Spleen (tissue), 13 donors: ENCODE measurements at regions of chr21 and their contacts with region 1.

Region 1: GRCh38 chr21:25385911-25386474 is 221.3 kb downstream of the MRPL39 start:
- DNase-seq: no peak
- H3K4me3 ChIP-seq: no peak overlapping the region
- H3K27ac ChIP-seq: no peak overlapping the region
- H3K4me1 ChIP-seq: peaks cover 0 to 7% (median 4%) of the 10 kb centered on the region in 6 donors
- H3K27me3 ChIP-seq: no peaks in the 10 kb centered on the region
- CTCF ChIP-seq: peak; percentile 39 to 82 (median 70)
- POLR2A ChIP-seq: no peak

Region 2: GRCh38 chr21:25283720-25284119 is 102.3 kb before region 1 on chr21:
- intact Hi-C with region 1: loop called (anchors 10 kb)
- DNase-seq: no peak
- H3K4me3 ChIP-seq: no peak overlapping the region
- H3K27ac ChIP-seq: no peak overlapping the region
- H3K4me1 ChIP-seq: no peaks in the 10 kb centered on the region
- H3K27me3 ChIP-seq: no peaks in the 10 kb centered on the region
- CTCF ChIP-seq: peak in 5 of 11 experiments; percentile 8 to 39 (median 24)
- POLR2A ChIP-seq: no peak

Region 3: GRCh38 chr21:25313829-25314228 is 72.2 kb before region 1 on chr21:
- intact Hi-C with region 1: no loop called
- DNase-seq: no peak
- H3K4me3 ChIP-seq: no peak overlapping the region
- H3K27ac ChIP-seq: no peak overlapping the region
- H3K4me1 ChIP-seq: peaks cover 0 to 9% (median 0%) of the 10 kb centered on the region in 6 donors
- H3K27me3 ChIP-seq: no peaks in the 10 kb centered on the region
- CTCF ChIP-seq: peak in 3 of 11 experiments; percentile 24 to 39 (median 24)
- POLR2A ChIP-seq: no peak